GM23248 (cell line): ENCODE measurements at regions of chr1 and their contacts with region 1.

Region 1: DNA sequence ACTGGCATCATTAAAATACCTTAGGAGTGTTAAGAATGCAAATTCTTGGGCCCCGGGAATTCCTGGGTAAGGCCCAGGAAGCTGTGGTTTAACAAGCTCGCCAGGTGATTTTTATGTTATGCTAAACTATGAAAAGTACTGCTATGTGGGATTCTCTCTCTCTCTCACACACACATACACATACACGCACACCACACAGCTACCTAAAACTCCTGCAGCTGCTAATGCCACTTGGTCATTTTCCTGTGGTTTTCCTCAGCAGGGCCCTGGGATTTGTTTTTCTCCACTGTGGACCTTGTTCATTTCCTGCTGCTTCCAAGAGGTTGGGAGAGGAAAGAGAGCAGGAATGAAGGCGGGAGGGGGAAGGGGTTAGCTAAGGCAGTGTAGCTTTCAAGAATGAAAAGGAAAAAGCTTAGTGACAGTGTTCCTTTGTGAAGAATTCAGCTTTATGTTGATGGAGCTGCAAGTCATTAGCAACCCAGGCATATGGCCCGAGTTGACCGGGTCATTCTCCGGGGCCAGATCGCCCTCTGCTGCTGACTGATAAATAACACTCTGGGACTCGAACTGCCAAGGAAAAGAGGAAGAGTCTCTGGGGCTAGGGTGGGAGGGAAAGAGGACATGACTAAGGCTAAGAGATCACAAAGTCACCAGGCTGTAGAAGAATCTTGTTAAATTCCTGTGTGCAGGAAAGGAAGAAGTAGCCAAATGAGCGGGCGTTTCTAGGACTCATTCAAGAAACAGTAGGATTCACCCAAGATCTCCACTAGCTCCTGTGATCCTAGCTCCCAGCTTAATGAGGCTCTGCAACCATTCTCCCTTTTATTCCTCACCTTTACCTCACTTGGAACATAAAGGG is 30.5 kb upstream of the LRIG2 start:
- DNase-seq: peak; percentile 94
- H3K4me3 ChIP-seq: peak overlapping the region; percentile 23; the same call in 1 of the 2 replicates
- H3K27ac ChIP-seq: peak overlapping the region; percentile 75
- H3K4me1 ChIP-seq: peaks cover 24% of the 10 kb centered on the region
- H3K27me3 ChIP-seq: no peaks in the 10 kb centered on the region

Region 2: GRCh38 chr1:112794654-112795239 is 247.8 kb before region 1 on chr1:
- in situ Hi-C with region 1: no loop called
- DNase-seq: no peak
- H3K4me3 ChIP-seq: no peak overlapping the region
- H3K27ac ChIP-seq: no peak overlapping the region
- H3K4me1 ChIP-seq: peaks cover 11% of the 10 kb centered on the region
- H3K27me3 ChIP-seq: no peaks in the 10 kb centered on the region

Region 3: DNA sequence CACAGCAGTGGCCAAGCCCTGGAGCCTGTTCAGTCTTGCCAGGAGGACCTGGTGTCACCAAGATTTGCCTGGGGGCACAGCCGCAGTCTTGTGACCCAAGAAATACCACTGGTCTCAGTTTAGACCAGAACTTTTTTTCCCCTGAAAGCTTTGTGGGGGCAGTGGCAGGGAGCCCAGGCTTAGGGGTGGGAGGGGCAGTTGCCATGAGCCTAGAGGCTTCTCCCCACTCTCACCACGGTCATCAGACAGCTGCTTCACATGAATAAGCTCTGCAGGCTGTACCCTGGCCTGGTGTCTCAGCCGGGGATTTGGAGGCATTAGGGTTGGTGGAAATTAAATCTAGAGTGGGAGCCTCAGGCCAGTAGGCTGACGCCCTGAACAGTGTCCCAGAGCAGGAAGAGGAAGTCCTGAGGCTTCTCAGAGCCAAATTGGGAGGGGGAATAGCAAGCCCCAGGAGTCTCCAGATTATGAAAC is 160.2 kb before region 1 on chr1:
- in situ Hi-C with region 1: loop called (anchors 10 kb)
- DNase-seq: peak; percentile 65
- H3K4me3 ChIP-seq: no peak overlapping the region
- H3K27ac ChIP-seq: peak overlapping the region; percentile 86
- H3K4me1 ChIP-seq: peaks cover 17% of the 10 kb centered on the region
- H3K27me3 ChIP-seq: no peaks in the 10 kb centered on the region